ENCODE measurements at regions of chr6 and their contacts with region 1.

Region 1: GRCh38 chr6:11585426-11586016 is 48.0 kb downstream of the TMEM170B start:
- DNase-seq: no peak
- ATAC-seq: no peak

Region 2: GRCh38 chr6:12233693-12234571 is 648.4 kb after region 1 on chr6:
- intact Hi-C with region 1: loop called (anchors 5 kb)
- DNase-seq: no peak
- ATAC-seq: peak; percentile 68

Region 3: DNA sequence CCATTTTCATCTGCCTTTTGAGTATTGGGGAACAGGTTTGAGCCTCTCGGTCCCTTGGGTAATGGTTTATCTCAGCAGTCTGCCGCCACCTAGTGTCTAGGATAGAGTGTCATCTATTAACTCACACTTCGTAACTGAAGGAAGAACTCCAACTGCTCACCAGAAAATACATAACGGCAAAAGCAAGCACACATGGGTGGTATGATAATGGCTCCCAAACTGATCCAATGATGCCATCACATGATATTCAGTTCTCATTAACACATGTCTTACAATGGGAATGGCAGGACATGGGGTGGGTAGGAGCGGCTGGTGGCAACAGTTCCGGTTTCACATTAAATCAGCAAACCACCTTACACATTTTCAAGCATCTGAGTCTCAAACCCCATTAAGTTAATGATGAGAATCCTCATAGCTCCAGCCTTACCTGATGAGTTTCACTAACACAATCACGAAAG is 1020.4 kb after region 1 on chr6:
- intact Hi-C with region 1: loop called (anchors 10 kb)
- DNase-seq: no peak
- ATAC-seq: peak; percentile 78